Ascending aorta (tissue), 2 donors: ENCODE measurements at regions of chr3 and their contacts with region 1.

Region 1: DNA sequence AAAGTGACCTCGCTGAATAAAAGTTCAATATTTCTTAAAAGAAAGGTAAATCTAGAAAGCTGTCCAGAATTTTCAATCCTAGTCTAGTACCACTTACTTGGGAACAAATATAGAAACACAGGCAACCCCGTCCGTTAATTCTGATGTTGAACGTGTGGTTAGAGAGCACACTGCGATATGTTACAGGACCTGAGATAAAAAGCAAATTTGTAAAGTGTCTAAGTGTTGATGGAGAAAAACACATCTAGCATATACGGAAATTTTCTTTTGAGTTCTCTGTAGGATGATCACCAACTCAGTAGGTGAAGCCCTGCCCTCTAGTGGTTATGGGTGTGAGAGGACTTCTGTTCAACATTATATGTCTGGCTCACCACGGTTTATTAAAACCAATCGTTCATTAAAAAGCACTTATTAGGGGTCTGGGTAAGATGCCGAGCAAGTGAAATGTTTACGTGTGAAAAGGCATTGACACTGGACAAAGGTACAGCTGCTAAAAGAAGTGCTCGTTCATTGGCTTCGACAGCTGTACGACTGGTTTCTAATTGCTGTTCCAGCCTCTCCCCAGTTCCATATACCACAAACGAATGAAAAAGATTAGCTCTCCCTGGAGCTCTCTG is 1.0 kb upstream of the ATP2C1 start:
- DNase-seq: peak in 1 of 2 donors; percentile 82
- H3K4me3 ChIP-seq: peak overlapping the region; percentile 71 to 96
- H3K27ac ChIP-seq: peak overlapping the region; percentile 92 to 98
- H3K4me1 ChIP-seq: peaks cover 0 to 6% of the 10 kb centered on the region in 2 donors
- H3K27me3 ChIP-seq: no peaks in the 10 kb centered on the region
- CTCF ChIP-seq: peak; percentile 76 to 82 (median 76)

Region 2: DNA sequence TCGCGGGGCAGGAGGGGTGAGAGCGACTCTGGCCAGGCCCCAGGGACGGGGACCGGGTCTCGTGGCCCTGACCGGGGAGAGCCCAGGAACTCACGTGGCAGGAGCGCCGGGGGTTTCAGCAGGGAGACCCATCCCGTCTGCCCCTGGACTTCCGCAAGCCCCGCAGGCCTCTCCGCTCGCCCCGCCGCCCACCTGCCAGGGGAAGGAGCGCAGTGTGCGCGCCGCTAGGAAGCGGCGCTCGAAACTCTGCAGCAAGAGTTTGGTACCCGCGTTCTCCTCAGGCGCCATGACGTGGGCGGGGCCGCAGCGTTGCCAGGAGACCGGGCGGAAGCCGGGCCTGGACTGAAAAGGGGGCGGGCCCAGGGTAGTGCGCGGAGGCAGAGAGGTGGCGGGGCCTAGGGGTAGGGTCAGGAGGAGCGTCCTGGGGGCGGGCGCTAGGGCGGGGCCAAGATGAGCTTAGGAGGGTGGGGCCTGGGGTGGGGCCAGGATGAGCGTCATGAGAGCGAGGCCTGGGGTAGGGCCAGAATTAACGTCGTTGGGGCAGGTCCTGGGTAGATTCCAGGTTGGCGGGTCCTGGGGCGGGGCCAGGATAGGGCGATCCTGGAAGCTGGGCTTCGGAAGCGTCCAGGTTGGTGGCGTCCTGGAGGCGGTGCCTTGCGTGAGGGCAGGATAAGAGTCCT is 781.5 kb before region 1 on chr3:
- intact Hi-C with region 1: loop called (anchors 10 kb)
- DNase-seq: peak; percentile 95 to 99
- H3K4me3 ChIP-seq: peak overlapping the region; percentile 82 to 87
- H3K27ac ChIP-seq: peak overlapping the region; percentile 72 to 80
- H3K4me1 ChIP-seq: peaks cover 0 to 2% of the 10 kb centered on the region in 2 donors
- H3K27me3 ChIP-seq: no peaks in the 10 kb centered on the region
- CTCF ChIP-seq: no peak

Region 3: GRCh38 chr3:130759699-130760338 is 133.0 kb before region 1 on chr3:
- intact Hi-C with region 1: loop called (anchors 2 kb)
- DNase-seq: peak in 1 of 2 donors; percentile 72
- H3K4me3 ChIP-seq: no peak overlapping the region
- H3K27ac ChIP-seq: no peak overlapping the region
- H3K4me1 ChIP-seq: no peaks in the 10 kb centered on the region
- H3K27me3 ChIP-seq: no peaks in the 10 kb centered on the region
- CTCF ChIP-seq: peak; percentile 51 to 77 (median 75)

Region 4: GRCh38 chr3:131381444-131382291 is 488.8 kb after region 1 on chr3 and contains the start of gene NUDT16:
- intact Hi-C with region 1: loop called (anchors 2 kb)
- DNase-seq: peak; percentile 99 to 100
- H3K4me3 ChIP-seq: peak within 1 kb of the TSS; percentile 82 to 95
- H3K27ac ChIP-seq: peak within 1 kb of the TSS; percentile 85 to 91
- H3K4me1 ChIP-seq: peaks cover 8 to 24% of the 10 kb centered on the region in 2 donors
- H3K27me3 ChIP-seq: no peaks in the 10 kb centered on the region
- CTCF ChIP-seq: peak in 1 of 3 experiments; percentile 6
- total RNA-seq, gene NUDT16: 41.0 TPM

Region 5: DNA sequence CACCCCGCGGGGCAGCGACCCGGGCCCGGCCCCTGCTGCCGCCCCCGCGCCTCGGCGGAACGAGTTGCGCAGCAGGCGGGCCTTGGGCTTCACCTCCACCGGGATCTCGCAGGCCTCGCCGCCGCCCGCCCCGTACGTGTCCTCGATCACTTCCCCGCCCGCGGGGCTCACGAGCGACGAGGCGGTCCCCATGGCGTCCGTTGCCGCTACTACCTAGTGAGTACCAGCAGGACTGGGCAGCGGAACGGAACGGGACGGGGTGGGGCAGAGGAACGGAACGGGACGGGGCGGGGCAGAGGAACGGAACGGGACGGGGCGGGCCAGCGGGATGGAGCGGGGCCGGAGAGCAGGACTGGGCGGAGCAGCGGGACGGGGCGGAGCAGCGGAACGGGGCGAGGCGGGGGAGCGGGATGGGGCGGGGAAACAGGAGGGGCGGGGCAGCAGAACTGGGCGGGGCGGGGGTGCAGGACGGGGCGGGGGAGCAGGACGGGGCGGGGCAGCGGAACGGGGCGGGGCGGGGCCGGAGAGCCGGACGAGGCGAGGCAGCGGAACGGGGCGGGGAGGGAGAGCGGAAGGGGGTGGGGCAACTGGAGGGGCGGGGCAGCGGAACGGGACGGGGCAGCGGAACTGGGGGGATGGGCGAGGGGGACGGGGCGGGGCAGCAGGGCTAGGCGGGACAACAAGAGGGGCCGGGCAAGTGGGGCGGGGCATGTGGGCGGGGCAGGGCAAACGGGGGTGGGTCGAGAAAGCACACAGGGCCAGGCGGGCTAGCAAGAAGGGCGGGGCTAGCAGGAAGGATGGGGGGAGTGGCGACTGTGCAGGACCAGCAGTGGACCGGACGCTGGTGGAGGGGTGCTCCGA is 1829.5 kb after region 1 on chr3 and contains the start of gene NPHP3:
- intact Hi-C with region 1: loop called (anchors 5 kb)
- DNase-seq: peak; percentile 88 to 98
- H3K4me3 ChIP-seq: peak within 1 kb of the TSS; percentile 85 to 96
- H3K27ac ChIP-seq: peak within 1 kb of the TSS; percentile 93 to 97
- H3K4me1 ChIP-seq: peaks cover 6 to 17% of the 10 kb centered on the region in 2 donors
- H3K27me3 ChIP-seq: no peaks in the 10 kb centered on the region
- CTCF ChIP-seq: no peak
- total RNA-seq, gene NPHP3: 11.9 TPM